ENCODE measurements at regions of chr11 and their contacts with region 1.

Region 1: GRCh38 chr11:44901120-44901633 is 49.5 kb downstream of the TP53I11 start:
- DNase-seq: no peak
- ATAC-seq: no peak
- H3K4me3 ChIP-seq: no peak overlapping the region
- H3K4me3 Mint-ChIP-seq: no peak overlapping the region
- H3K27ac ChIP-seq: no peak overlapping the region
- H3K27ac Mint-ChIP-seq: no peak overlapping the region
- H3K4me1 ChIP-seq: peaks cover 0 to 9% of the 10 kb centered on the region in 2 donors
- H3K4me1 Mint-ChIP-seq: peaks cover 10% of the 10 kb centered on the region
- H3K27me3 ChIP-seq: no peaks in the 10 kb centered on the region
- H3K27me3 Mint-ChIP-seq: peaks cover 4% of the 10 kb centered on the region
- CTCF ChIP-seq: no peak

Region 2: GRCh38 chr11:44814881-44815592 is 86.1 kb before region 1 on chr11:
- CTCF ChIA-PET with region 1: no interaction called
- POLR2A ChIA-PET with region 1: no interaction called
- intact Hi-C with region 1: no loop called
- DNase-seq: no peak
- ATAC-seq: no peak
- H3K4me3 ChIP-seq: no peak overlapping the region
- H3K4me3 Mint-ChIP-seq: no peak overlapping the region
- H3K27ac ChIP-seq: no peak overlapping the region
- H3K27ac Mint-ChIP-seq: no peak overlapping the region
- H3K4me1 ChIP-seq: no peaks in the 10 kb centered on the region
- H3K4me1 Mint-ChIP-seq: no peaks in the 10 kb centered on the region
- H3K27me3 ChIP-seq: no peaks in the 10 kb centered on the region
- H3K27me3 Mint-ChIP-seq: no peaks in the 10 kb centered on the region
- CTCF ChIP-seq: no peak

Region 3: GRCh38 chr11:44911029-44911814 is 10.0 kb after region 1 on chr11:
- CTCF ChIA-PET with region 1: interaction called, 18 read pairs
- POLR2A ChIA-PET with region 1: no interaction called
- intact Hi-C with region 1: no loop called
- DNase-seq: peak; percentile 85
- ATAC-seq: peak; percentile 69
- H3K4me3 ChIP-seq: no peak overlapping the region
- H3K4me3 Mint-ChIP-seq: no peak overlapping the region
- H3K27ac ChIP-seq: no peak overlapping the region
- H3K27ac Mint-ChIP-seq: no peak overlapping the region
- H3K4me1 ChIP-seq: peaks cover 23 to 31% of the 10 kb centered on the region in 2 donors
- H3K4me1 Mint-ChIP-seq: peaks cover 24% of the 10 kb centered on the region
- H3K27me3 ChIP-seq: peaks cover 0 to 5% (median 0%) of the 10 kb centered on the region in 4 experiments
- H3K27me3 Mint-ChIP-seq: peaks cover 4% of the 10 kb centered on the region
- CTCF ChIP-seq: peak; percentile 82

Region 4: GRCh38 chr11:44928816-44929215 is 27.6 kb after region 1 on chr11:
- CTCF ChIA-PET with region 1: no interaction called
- POLR2A ChIA-PET with region 1: no interaction called
- intact Hi-C with region 1: no loop called
- DNase-seq: no peak
- ATAC-seq: no peak
- H3K4me3 ChIP-seq: no peak overlapping the region
- H3K4me3 Mint-ChIP-seq: no peak overlapping the region
- H3K27ac ChIP-seq: no peak overlapping the region
- H3K27ac Mint-ChIP-seq: no peak overlapping the region
- H3K4me1 ChIP-seq: peaks cover 0 to 6% of the 10 kb centered on the region in 2 donors
- H3K4me1 Mint-ChIP-seq: no peaks in the 10 kb centered on the region
- H3K27me3 ChIP-seq: no peaks in the 10 kb centered on the region
- H3K27me3 Mint-ChIP-seq: no peaks in the 10 kb centered on the region
- CTCF ChIP-seq: no peak